Activated T-helper 1 cell treated with anti-CD3 and anti-CD28 coated beads, Interleukin-12 subunit alpha, Interleukin-12 subunit beta, Interleukin-2, Interleukin-4 antibody, amounts not matched to agents 30 ng/mL and 10 ng/mL and 1 ng/mL, durations not matched to agents 14 hours and 24 hours and 36 hours (primary cell): ENCODE measurements at regions of chr7 and their contacts with region 1.

Region 1: DNA sequence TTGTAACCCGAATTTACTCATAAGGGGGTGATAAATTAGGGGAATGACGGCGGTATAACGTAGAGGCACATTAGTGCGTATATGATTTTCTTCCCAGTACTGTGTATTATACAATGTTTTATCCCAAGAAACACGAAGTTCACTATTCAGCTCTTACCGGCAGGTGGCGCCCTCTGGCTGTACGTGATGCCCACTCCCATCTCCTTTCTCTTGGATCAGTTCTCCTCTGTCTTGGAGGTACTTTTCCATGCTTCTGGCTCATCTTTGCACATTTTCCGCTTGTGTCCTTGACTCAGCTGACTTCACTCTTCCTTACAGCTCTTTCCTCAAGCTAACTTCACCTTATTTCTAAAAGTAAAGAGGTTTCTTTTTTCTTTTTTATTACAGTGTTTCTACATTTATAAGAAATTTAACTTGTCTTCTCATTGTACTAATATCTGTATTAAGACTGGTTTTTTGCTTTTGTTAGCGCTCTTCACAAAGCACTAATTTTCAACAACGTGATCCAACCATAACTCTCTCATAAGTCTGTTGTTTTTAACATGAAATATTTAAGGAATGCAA is 21.3 kb downstream of the TMEM176B start:
- DNase-seq: peak; percentile 54
- H3K4me3 Mint-ChIP-seq: no peak overlapping the region
- H3K27ac Mint-ChIP-seq: no peak overlapping the region
- H3K4me1 Mint-ChIP-seq: peaks cover 9% of the 10 kb centered on the region
- H3K27me3 Mint-ChIP-seq: peaks cover 29% of the 10 kb centered on the region

Region 2: DNA sequence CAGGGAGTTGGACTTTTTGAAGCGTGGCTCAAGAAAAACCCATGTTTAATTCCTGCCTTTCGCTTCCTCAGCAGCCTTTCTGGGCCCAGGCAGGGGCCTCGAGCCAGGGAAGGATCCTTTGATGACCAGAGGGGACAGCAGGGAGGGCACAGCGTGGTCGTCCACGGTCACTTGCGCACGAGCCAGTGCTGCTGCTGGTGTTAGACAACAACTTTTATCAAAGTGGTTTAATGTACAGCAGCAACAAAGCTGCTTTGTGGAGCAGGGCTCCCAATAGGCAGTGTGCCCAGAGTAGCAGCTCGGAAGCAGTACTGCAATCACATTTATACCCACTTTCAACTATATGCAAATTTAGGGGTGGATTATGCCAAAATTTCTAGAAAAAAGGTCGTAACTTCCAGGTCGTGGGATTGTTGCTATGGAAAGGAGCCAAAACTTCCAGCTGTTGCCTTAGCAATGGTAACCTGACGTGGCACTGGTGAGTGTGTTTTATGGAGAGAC is 56.3 kb before region 1 on chr7:
- intact Hi-C with region 1: no loop called
- DNase-seq: no peak
- H3K4me3 Mint-ChIP-seq: peak overlapping the region; percentile 74
- H3K27ac Mint-ChIP-seq: peak overlapping the region; percentile 71
- H3K4me1 Mint-ChIP-seq: peaks cover 81% of the 10 kb centered on the region
- H3K27me3 Mint-ChIP-seq: no peaks in the 10 kb centered on the region

Region 3: DNA sequence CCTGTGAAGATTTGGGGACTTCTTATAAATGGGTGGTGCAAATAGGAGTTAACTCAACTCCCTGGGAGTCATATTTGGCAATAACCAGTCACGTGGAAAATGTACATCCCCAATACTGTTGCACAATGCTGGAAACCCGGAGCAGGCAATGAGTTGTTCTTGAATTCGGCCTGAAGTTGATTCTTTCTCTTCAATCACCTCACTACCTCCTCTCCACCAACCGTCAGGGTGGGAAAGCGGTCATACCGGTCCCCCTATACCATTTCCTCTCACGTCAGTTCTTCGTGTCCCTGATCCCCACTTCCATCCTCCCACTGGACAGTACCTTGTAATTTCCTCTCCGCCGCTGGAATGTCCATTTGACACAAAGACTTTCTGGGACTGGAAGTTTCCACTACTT is 38.8 kb before region 1 on chr7:
- intact Hi-C with region 1: no loop called
- DNase-seq: no peak
- H3K4me3 Mint-ChIP-seq: peak overlapping the region; percentile 97
- H3K27ac Mint-ChIP-seq: peak overlapping the region; percentile 89
- H3K4me1 Mint-ChIP-seq: peaks cover 88% of the 10 kb centered on the region
- H3K27me3 Mint-ChIP-seq: no peaks in the 10 kb centered on the region

Region 4: DNA sequence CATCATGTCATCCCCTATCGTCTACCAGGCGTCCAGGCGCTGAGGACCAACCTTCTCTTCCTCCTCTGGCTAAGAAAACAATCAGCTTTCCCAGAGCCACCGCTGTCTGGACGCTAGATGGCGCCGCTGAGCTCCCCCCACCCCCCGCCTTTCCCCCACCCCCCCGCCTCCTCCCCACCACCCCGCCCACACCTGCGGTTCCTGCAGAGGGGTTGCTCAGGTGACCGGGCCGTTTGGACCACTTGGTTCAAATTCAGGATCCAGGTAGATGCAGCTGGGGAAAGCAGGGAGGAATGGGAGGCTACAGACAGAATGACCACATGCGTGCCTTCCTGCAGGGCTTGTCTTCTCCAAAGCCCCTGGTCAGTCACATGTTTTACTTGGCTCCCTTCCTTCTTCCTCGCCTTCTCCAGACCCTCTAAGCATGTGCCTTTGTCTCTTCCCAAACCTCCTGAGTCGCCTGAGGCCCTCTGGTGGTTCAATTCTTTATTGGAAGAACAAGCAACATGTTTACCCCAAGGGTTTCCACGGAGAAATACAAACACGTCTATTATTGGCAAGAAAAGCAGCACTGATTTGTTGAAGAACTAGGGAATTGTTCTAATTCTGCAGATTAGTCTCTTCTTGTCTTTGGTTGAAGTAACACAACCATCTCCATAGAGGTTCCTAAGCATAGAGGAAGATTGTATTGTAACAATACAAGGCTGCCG is 98.2 kb after region 1 on chr7:
- intact Hi-C with region 1: loop called (anchors 5 kb)
- DNase-seq: no peak
- H3K4me3 Mint-ChIP-seq: no peak overlapping the region
- H3K27ac Mint-ChIP-seq: no peak overlapping the region
- H3K4me1 Mint-ChIP-seq: no peaks in the 10 kb centered on the region
- H3K27me3 Mint-ChIP-seq: peaks cover 20% of the 10 kb centered on the region

Region 5: GRCh38 chr7:150898475-150899011 is 119.7 kb after region 1 on chr7:
- intact Hi-C with region 1: loop called (anchors 5 kb)
- DNase-seq: peak; percentile 56
- H3K4me3 Mint-ChIP-seq: no peak overlapping the region
- H3K27ac Mint-ChIP-seq: no peak overlapping the region
- H3K4me1 Mint-ChIP-seq: peaks cover 6% of the 10 kb centered on the region
- H3K27me3 Mint-ChIP-seq: peaks cover 33% of the 10 kb centered on the region